Transverse colon (tissue), 4 donors: ENCODE measurements at regions of chr5 and their contacts with region 1.

Region 1: DNA sequence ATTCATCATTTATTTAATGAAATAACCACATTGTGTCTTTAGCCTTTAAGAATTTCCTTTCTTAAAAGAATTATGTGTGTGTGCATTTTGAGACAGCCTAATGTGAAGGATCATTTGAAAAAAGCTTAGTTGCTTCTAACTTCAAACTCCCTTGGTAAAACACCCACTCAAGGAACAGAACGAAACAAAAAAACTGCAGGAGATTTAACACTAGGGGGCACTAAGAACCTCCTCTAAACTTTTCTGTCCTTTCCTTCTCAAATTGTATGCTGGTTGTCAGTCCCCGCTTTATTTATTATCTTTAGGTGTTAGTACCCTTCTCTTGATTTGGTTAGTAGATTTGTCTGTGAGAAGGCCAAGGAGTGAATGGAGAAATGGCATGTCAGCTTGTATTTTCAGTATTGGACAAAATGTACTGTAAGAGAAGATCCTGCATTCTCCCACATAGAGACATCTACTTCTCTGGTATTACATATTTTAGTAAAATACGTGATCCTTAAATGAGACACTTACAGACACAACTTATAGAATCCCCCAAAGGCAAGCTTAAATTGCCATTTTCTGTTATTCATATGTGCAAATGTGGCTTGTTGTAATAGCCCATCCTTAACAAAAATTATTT is 229.7 kb downstream of the MRPS30 start:
- DNase-seq: no peak
- H3K4me3 ChIP-seq: no peak overlapping the region
- H3K27ac ChIP-seq: no peak overlapping the region
- H3K4me1 ChIP-seq: no peaks in the 10 kb centered on the region
- H3K27me3 ChIP-seq: no peaks in the 10 kb centered on the region
- CTCF ChIP-seq: peak; percentile 45 to 55 (median 52)
- EP300 ChIP-seq: no peak
- POLR2A ChIP-seq: no peak

Region 2: GRCh38 chr5:44943647-44944046 is 94.8 kb before region 1 on chr5:
- in situ Hi-C with region 1: no loop called
- intact Hi-C with region 1: no loop called
- DNase-seq: no peak
- H3K4me3 ChIP-seq: no peak overlapping the region
- H3K27ac ChIP-seq: no peak overlapping the region
- H3K4me1 ChIP-seq: no peaks in the 10 kb centered on the region
- H3K27me3 ChIP-seq: no peaks in the 10 kb centered on the region
- CTCF ChIP-seq: no peak
- EP300 ChIP-seq: no peak
- POLR2A ChIP-seq: no peak

Region 3: GRCh38 chr5:45532826-45533624 is 494.5 kb after region 1 on chr5:
- in situ Hi-C with region 1: loop called in 1 of 4 experiments (anchors 25 kb)
- intact Hi-C with region 1: no loop called
- DNase-seq: no peak
- H3K4me3 ChIP-seq: no peak overlapping the region
- H3K27ac ChIP-seq: no peak overlapping the region
- H3K4me1 ChIP-seq: no peaks in the 10 kb centered on the region
- H3K27me3 ChIP-seq: no peaks in the 10 kb centered on the region
- CTCF ChIP-seq: no peak
- EP300 ChIP-seq: no peak
- POLR2A ChIP-seq: no peak